Caco-2 (cell line): ENCODE measurements at regions of chr4 and their contacts with region 1.

Region 1: DNA sequence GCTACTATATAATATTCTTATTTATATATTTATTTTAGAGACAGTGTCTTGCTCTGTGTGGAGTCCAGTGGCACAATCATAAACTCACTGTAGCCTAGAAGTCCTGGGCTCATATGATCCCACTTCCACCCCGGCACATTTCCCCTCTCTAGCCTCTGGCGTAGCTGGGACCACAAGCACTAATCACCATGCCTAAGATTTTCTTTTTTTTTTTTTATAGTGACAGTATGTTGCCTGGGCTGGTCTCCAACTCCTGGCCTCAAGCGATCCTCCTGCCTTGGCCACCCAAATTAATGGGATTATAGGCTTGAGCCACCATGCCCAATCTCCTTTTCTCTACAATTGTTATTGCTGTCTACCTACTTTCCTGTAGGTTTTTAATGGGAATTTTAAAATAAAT is 74.1 kb upstream of the BMP3 start:
- DNase-seq: no peak
- H3K4me3 ChIP-seq: no peak overlapping the region
- H3K4me3 Mint-ChIP-seq: no peak overlapping the region
- H3K27ac Mint-ChIP-seq: no peak overlapping the region
- H3K4me1 ChIP-seq: no peaks in the 10 kb centered on the region
- H3K4me1 Mint-ChIP-seq: no peaks in the 10 kb centered on the region
- H3K27me3 ChIP-seq: no peaks in the 10 kb centered on the region
- H3K27me3 Mint-ChIP-seq: peaks cover 2% of the 10 kb centered on the region
- CTCF ChIP-seq: no peak

Region 2: DNA sequence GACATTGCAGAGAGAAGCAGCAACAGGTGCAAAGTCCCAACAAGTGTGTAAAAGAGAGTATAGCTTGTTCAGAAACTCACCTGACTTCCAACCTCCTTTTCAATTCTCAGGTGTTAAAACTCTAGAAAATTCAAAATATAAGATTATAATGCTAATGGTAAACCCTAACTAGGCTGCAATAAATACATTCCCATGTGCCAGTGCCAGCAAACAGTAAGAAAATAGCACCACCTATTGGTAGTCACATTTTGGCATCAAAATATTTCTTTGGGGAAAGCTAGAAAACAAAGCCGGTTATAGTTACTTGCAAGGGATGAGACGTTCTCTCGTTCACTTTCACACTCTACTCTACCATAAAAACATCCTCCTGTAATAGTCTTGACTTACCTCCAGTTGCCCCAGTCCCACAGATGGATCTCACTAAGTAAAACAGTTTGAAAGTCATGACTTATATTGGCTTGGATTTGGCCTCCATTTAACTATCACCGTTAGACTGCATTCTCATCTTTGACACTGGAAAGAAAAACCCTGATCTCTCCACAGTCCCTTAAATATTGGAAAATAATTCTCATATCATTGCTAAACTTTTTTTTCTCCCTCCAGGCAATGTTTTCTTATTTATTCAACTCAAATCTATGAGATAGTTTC is 83.7 kb after region 1 on chr4:
- CTCF ChIA-PET with region 1: no interaction called
- POLR2A ChIA-PET with region 1: no interaction called
- intact Hi-C with region 1: no loop called
- DNase-seq: peak in 1 of 2 experiments; percentile 20
- H3K4me3 ChIP-seq: no peak overlapping the region
- H3K4me3 Mint-ChIP-seq: no peak overlapping the region
- H3K27ac Mint-ChIP-seq: no peak overlapping the region
- H3K4me1 ChIP-seq: no peaks in the 10 kb centered on the region
- H3K4me1 Mint-ChIP-seq: no peaks in the 10 kb centered on the region
- H3K27me3 ChIP-seq: no peaks in the 10 kb centered on the region
- H3K27me3 Mint-ChIP-seq: peaks cover 2% of the 10 kb centered on the region
- CTCF ChIP-seq: peak; percentile 39 to 55

Region 3: GRCh38 chr4:81609844-81610243 is 653.4 kb after region 1 on chr4:
- CTCF ChIA-PET with region 1: interaction called, 10 read pairs
- POLR2A ChIA-PET with region 1: no interaction called
- intact Hi-C with region 1: no loop called
- DNase-seq: no peak
- H3K4me3 ChIP-seq: no peak overlapping the region
- H3K4me3 Mint-ChIP-seq: no peak overlapping the region
- H3K27ac Mint-ChIP-seq: no peak overlapping the region
- H3K4me1 ChIP-seq: no peaks in the 10 kb centered on the region
- H3K4me1 Mint-ChIP-seq: peaks cover 8% of the 10 kb centered on the region
- H3K27me3 ChIP-seq: no peaks in the 10 kb centered on the region
- H3K27me3 Mint-ChIP-seq: no peaks in the 10 kb centered on the region
- CTCF ChIP-seq: no peak